ENCODE measurements at regions of chr16 and their contacts with region 1.

Region 1: DNA sequence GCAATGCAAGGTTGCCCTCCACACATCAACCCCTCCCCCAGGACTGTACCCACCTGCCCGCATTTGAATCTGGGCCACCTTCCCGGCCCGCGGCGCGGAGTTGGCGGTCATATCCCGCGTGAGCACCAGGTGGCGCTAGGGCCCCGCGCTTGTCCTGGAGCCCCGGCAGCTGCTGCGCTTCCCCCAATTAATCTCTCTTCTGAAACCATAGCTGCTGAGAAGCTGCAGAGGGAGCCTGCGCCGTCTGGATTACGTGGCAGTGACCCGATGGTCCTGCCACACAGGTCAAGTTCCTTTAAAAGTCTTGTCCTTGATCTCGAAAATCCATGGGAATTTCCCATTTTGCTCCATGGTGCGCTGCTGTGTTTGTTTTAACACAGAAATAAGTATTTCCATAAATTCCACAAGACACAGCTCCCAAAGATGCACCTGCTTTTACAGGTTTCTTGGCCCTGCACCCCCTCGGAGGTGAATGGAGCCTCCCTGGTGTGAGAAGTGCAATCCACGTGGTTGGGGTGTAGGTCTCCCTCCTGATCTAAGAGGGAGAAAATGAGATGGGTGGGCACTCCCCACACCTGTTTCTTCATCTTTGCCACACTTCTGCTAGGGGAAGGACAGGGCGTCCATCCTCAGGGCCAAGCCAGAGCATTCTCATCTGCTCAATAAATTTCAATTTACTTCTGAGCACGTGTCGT is 22.1 kb downstream of the COX4I1 start:
- DNase-seq: peak; percentile 73
- H3K4me3 ChIP-seq: no peak overlapping the region
- H3K27ac ChIP-seq: no peak overlapping the region
- H3K4me1 ChIP-seq: no peaks in the 10 kb centered on the region
- H3K27me3 ChIP-seq: peaks cover 71% of the 10 kb centered on the region
- CTCF ChIP-seq: peak; percentile 97

Region 2: GRCh38 chr16:85316321-85316919 is 505.2 kb before region 1 on chr16:
- intact Hi-C with region 1: no loop called
- DNase-seq: peak; percentile 48
- H3K4me3 ChIP-seq: no peak overlapping the region
- H3K27ac ChIP-seq: no peak overlapping the region
- H3K4me1 ChIP-seq: peaks cover 26% of the 10 kb centered on the region
- H3K27me3 ChIP-seq: no peaks in the 10 kb centered on the region
- CTCF ChIP-seq: peak; percentile 86

Region 3: GRCh38 chr16:85869785-85870558 is 48.4 kb after region 1 on chr16:
- intact Hi-C with region 1: no loop called
- DNase-seq: no peak
- H3K4me3 ChIP-seq: no peak overlapping the region
- H3K27ac ChIP-seq: peak overlapping the region; percentile 9
- H3K4me1 ChIP-seq: peaks cover 7% of the 10 kb centered on the region
- H3K27me3 ChIP-seq: peaks cover 46% of the 10 kb centered on the region
- CTCF ChIP-seq: no peak

Region 4: GRCh38 chr16:86016201-86016871 is 194.7 kb after region 1 on chr16:
- intact Hi-C with region 1: loop called (anchors 2 kb)
- DNase-seq: no peak
- H3K4me3 ChIP-seq: no peak overlapping the region
- H3K27ac ChIP-seq: no peak overlapping the region
- H3K4me1 ChIP-seq: peaks cover 7% of the 10 kb centered on the region
- H3K27me3 ChIP-seq: peaks cover 89% of the 10 kb centered on the region
- CTCF ChIP-seq: peak; percentile 84

Region 5: DNA sequence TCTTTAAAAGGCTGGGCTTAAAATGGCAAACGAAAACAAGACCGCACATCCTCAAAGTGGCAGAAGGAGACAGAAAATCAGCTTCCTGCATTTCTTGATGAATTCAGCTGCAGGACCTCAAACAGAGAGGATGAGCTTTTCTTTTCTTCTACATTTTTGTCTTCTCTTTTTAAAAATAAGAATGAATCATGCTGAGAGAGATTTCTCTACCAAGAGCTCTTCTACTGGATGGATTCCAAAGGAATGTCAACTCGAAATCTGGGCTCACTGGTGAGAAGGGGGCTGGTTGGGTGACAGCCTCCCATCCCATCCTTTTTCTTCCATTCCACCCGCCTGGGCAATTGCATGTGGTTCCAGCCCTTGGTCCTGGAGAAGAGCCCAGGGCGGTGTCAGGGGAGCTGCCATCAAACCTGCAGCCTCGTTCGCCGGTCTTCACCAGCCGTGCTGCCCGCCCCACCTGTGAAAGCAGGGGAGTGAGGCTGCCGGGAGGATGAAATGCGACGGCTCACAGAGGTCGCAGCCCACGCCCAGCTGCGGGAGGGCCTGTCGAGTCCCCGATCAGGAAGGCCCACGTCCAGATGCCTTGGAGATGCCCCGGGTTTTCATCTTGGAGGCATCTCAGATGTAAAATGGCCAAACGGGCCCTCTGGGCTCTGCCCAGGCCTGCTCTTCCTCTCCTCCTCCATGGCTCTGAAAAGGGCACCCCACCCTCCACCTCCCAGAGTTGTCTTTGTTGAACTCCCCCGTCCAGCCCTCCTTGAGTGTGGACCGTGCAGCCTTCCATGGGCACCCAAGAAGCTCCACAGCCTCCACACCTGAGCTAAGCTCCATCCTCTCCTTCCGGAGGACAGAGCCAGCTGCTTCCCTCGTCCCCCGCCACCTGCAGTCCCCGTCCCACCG is 878.7 kb after region 1 on chr16:
- intact Hi-C with region 1: no loop called
- DNase-seq: no peak
- H3K4me3 ChIP-seq: no peak overlapping the region
- H3K27ac ChIP-seq: no peak overlapping the region
- H3K4me1 ChIP-seq: no peaks in the 10 kb centered on the region
- H3K27me3 ChIP-seq: peaks cover 39% of the 10 kb centered on the region
- CTCF ChIP-seq: no peak